ENCODE measurements at regions of chr3 and their contacts with region 1.

Region 1: DNA sequence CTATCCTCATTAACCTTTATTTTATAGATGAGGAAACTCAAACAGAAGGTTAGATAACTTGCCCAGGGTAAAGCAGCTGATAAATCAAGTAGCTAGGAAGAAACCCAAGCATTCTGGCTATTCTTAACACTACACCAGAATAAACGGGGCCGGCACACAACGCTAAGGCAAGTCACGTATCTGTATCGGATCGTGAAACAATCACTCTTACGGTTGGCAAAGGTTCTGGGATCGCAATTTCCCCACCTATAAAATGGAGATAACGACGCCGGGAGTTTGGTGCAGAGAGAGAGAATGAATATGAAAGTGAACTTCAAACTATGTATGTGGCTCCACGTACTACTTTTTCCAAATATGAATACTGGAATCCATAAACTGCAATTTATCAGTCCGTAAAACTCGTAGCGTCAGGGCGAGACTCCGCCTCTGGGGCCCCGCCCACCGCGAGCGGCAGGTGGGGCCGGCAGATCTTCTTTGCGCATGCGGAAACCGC is 252 bp upstream of the ARMC8 start:
- DNase-seq: peak; percentile 94
- H3K4me3 Mint-ChIP-seq: peak overlapping the region; percentile 91
- H3K27ac Mint-ChIP-seq: peak overlapping the region; percentile 93
- H3K4me1 Mint-ChIP-seq: peaks cover 35% of the 10 kb centered on the region
- H3K27me3 Mint-ChIP-seq: peaks cover 7% of the 10 kb centered on the region

Region 2: DNA sequence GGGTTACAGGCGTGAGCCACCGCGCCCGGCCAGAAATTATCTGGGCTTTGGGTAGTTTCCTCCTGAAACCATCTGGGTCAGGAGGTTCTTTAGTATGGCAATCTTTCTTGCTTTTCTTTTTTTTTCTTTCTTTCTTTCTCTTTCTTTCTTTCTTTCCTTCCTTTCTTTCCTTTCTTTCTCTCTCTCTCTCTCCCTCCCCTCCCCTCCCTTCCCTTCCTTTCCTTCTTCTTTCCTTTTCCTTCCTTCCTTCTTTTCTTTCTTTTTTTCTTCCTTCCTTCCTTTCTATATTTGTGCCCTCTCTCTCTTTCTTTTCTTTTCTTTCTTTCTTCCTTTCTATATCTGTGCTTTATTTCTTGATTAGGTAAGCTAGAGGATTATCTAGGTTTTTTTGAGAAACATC is 29.1 kb before region 1 on chr3:
- CTCF ChIA-PET with region 1: no interaction called
- POLR2A ChIA-PET with region 1: no interaction called
- intact Hi-C with region 1: no loop called
- DNase-seq: no peak
- H3K4me3 Mint-ChIP-seq: no peak overlapping the region
- H3K27ac Mint-ChIP-seq: no peak overlapping the region
- H3K4me1 Mint-ChIP-seq: no peaks in the 10 kb centered on the region
- H3K27me3 Mint-ChIP-seq: no peaks in the 10 kb centered on the region

Region 3: DNA sequence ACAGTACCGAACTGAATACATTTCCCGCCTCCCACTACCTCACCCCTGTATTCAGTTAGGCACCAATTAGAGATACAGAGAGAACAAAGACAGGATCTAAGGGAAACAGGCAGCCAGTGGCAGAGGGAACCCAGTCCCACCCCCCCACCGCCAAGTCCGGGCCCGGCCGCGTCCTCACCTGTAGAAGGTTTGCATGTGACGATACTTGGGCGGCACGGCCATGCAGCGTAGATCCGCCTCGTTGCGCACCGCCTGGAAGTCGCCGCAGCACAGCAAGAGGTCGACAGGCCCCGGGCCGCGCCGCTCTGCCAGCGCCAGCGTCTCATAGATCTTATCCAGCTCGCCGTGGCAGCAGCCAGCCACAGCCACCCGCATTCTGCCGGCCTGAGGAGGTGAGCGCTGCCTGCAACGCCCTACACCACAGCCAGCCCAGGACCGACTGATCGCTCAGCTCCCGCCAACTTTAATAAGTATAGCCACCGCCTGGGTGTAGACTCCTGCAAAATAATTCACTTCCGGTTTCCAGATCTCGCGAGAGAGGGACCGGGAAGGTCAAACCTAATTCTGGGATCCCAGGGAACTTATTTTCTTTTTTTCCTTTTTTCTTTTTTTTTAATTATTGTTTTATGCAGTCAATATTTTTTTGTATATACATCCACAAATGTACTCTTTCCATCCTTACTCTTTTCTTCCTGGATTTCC is 12.3 kb before region 1 on chr3 and contains the start of gene DBR1:
- CTCF ChIA-PET with region 1: interaction called, 9 read pairs
- POLR2A ChIA-PET with region 1: interaction called, 16 read pairs
- intact Hi-C with region 1: loop called (anchors 1 kb)
- DNase-seq: peak; percentile 77
- H3K4me3 Mint-ChIP-seq: peak within 1 kb of the TSS; percentile 96
- H3K27ac Mint-ChIP-seq: peak within 1 kb of the TSS; percentile 97
- H3K4me1 Mint-ChIP-seq: peaks cover 38% of the 10 kb centered on the region
- H3K27me3 Mint-ChIP-seq: no peaks in the 10 kb centered on the region
- total RNA-seq, gene DBR1: 21.7 to 22.6 TPM

Region 4: GRCh38 chr3:138219255-138219654 is 32.4 kb after region 1 on chr3:
- CTCF ChIA-PET with region 1: no interaction called
- POLR2A ChIA-PET with region 1: interaction called, 5 read pairs
- intact Hi-C with region 1: loop called (anchors 2 kb)
- DNase-seq: peak; percentile 21
- H3K4me3 Mint-ChIP-seq: no peak overlapping the region
- H3K27ac Mint-ChIP-seq: peak overlapping the region; percentile 25
- H3K4me1 Mint-ChIP-seq: peaks cover 31% of the 10 kb centered on the region
- H3K27me3 Mint-ChIP-seq: no peaks in the 10 kb centered on the region

Region 5: GRCh38 chr3:138417559-138417982 is 230.7 kb after region 1 on chr3:
- CTCF ChIA-PET with region 1: interaction called, 4 read pairs
- POLR2A ChIA-PET with region 1: no interaction called
- intact Hi-C with region 1: loop called (anchors 10 kb)
- DNase-seq: peak; percentile 74
- H3K4me3 Mint-ChIP-seq: no peak overlapping the region
- H3K27ac Mint-ChIP-seq: no peak overlapping the region
- H3K4me1 Mint-ChIP-seq: no peaks in the 10 kb centered on the region
- H3K27me3 Mint-ChIP-seq: peaks cover 9% of the 10 kb centered on the region

Region 6: GRCh38 chr3:139343895-139344856 is 1157.3 kb after region 1 on chr3 and contains the start of gene MRPS22:
- CTCF ChIA-PET with region 1: no interaction called
- POLR2A ChIA-PET with region 1: no interaction called
- intact Hi-C with region 1: loop called (anchors 10 kb)
- DNase-seq: peak; percentile 90
- H3K4me3 Mint-ChIP-seq: no peak within 1 kb of the TSS
- H3K27ac Mint-ChIP-seq: no peak within 1 kb of the TSS
- H3K4me1 Mint-ChIP-seq: peaks cover 10% of the 10 kb centered on the region
- H3K27me3 Mint-ChIP-seq: no peaks in the 10 kb centered on the region
- total RNA-seq, gene MRPS22: 49.9 to 50.2 TPM